ENCODE measurements at regions of chr4 and their contacts with region 1.

Region 1: GRCh38 chr4:118888666-118889311 is at the start of gene SYNPO2:
- DNase-seq: no peak
- H3K4me3 ChIP-seq: peak within 1 kb of the TSS; percentile 37 to 71 (median 53)
- H3K27ac ChIP-seq: peak within 1 kb of the TSS; percentile 69 to 85 (median 82)
- H3K4me1 ChIP-seq: peaks cover 0 to 42% (median 0%) of the 10 kb centered on the region in 3 donors
- H3K27me3 ChIP-seq: no peaks in the 10 kb centered on the region
- CTCF ChIP-seq: no peak
- POLR2A ChIP-seq: peak in 2 of 4 donors; percentile 83 to 89
- total RNA-seq, gene SYNPO2: 19.0 to 418 (median 84.2) TPM

Region 2: GRCh38 chr4:118772081-118772766 is 116.6 kb before region 1 on chr4:
- intact Hi-C with region 1: loop called (anchors 10 kb)
- DNase-seq: no peak
- H3K4me3 ChIP-seq: peak overlapping the region in 2 of 4 donors; percentile 2 to 10
- H3K27ac ChIP-seq: peak overlapping the region; percentile 17 to 84 (median 51)
- H3K4me1 ChIP-seq: peaks cover 0 to 70% (median 24%) of the 10 kb centered on the region in 3 donors
- H3K27me3 ChIP-seq: no peaks in the 10 kb centered on the region
- CTCF ChIP-seq: peak; percentile 23 to 76 (median 56)
- POLR2A ChIP-seq: no peak